ENCODE measurements at regions of chr19 and their contacts with region 1.

Region 1: DNA sequence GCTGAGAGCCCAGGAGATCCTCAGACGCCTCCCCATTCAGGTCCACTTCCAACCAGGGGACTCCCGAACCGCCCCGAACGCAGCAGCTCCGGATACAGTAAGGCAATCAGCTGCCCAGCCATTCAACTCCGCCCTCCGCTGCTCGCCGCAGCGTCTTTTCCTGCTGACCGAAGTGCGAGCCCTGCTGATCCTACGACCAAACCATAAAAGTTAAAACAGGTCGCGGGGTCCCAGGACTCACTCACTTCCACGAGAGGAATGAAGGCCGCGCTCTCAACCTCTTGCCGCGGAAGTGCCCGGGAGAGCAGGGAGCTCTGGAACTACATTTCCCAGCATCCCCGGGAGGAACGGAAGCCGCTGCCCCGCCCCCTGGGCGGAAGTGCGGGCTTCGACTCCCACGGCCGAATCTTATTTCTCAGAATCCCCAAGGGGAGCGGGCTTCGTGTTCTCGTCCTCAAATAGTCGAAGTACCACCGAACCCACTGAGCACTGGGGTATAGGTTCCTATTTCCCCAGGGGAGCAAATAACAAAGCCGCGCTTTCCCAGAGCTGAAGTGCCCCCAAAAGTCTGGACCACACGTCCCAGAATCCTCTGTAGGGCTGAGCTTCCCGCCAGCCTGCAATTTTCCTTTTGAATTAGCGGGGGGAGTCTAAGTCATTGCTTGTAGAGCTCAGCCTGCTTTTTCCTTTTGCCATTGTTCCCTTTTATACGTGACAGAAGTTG is at the start of gene ZNF45:
- DNase-seq: peak; percentile 87 to 94 (median 92)
- H3K4me3 ChIP-seq: peak within 1 kb of the TSS; percentile 45 to 98 (median 80)
- H3K27ac ChIP-seq: peak within 1 kb of the TSS; percentile 51 to 95 (median 88)
- H3K27me3 ChIP-seq: no peaks in the 10 kb centered on the region
- CTCF ChIP-seq: peak in 24 of 56 donors; percentile 8 to 49 (median 26)
- total RNA-seq, gene ZNF45: 5.4 to 16.4 (median 10.9) TPM

Region 2: GRCh38 chr19:43826787-43827754 is 108.1 kb before region 1 on chr19 and contains the start of gene ZNF283:
- intact Hi-C with region 1: loop called (anchors 5 to 10 kb)
- DNase-seq: peak; percentile 78 to 95 (median 94)
- H3K4me3 ChIP-seq: peak within 1 kb of the TSS; percentile 50 to 86 (median 76)
- H3K27ac ChIP-seq: peak within 1 kb of the TSS in 36 of 59 donors; percentile 3 to 78 (median 48)
- H3K27me3 ChIP-seq: no peaks in the 10 kb centered on the region
- CTCF ChIP-seq: peak in 22 of 56 donors; percentile 11 to 43 (median 24)
- total RNA-seq, gene ZNF283: 17.2 to 43.0 (median 24.6) TPM

Region 3: GRCh38 chr19:43842007-43842406 is 93.1 kb before region 1 on chr19:
- intact Hi-C with region 1: no loop called
- DNase-seq: no peak
- H3K4me3 ChIP-seq: no peak overlapping the region
- H3K27ac ChIP-seq: no peak overlapping the region
- H3K27me3 ChIP-seq: no peaks in the 10 kb centered on the region
- CTCF ChIP-seq: no peak

Region 4: GRCh38 chr19:43905897-43906296 is 29.2 kb before region 1 on chr19:
- intact Hi-C with region 1: loop called in 1 of 2 experiments (anchors 2 kb)
- DNase-seq: no peak
- H3K4me3 ChIP-seq: no peak overlapping the region
- H3K27ac ChIP-seq: no peak overlapping the region
- H3K27me3 ChIP-seq: no peaks in the 10 kb centered on the region
- CTCF ChIP-seq: no peak

Region 5: GRCh38 chr19:43950834-43951645 is 15.9 kb after region 1 on chr19 and contains the start of gene ZNF221:
- intact Hi-C with region 1: loop called (anchors 1 kb)
- DNase-seq: peak; percentile 80 to 92 (median 88)
- H3K4me3 ChIP-seq: peak within 1 kb of the TSS; percentile 54 to 99 (median 85)
- H3K27ac ChIP-seq: peak within 1 kb of the TSS in 55 of 59 donors; percentile 2 to 86 (median 71)
- H3K27me3 ChIP-seq: no peaks in the 10 kb centered on the region
- CTCF ChIP-seq: peak in 53 of 56 donors; percentile 19 to 74 (median 59)
- total RNA-seq, gene ZNF221: 7.4 to 29.1 (median 15.2) TPM

Region 6: GRCh38 chr19:43983912-43984686 is 49.0 kb after region 1 on chr19 and contains the start of gene ZNF155:
- intact Hi-C with region 1: loop called in 1 of 2 experiments (anchors 5 kb)
- DNase-seq: peak; percentile 88 to 97 (median 95)
- H3K4me3 ChIP-seq: peak within 1 kb of the TSS; percentile 43 to 86 (median 73)
- H3K27ac ChIP-seq: peak within 1 kb of the TSS in 42 of 59 donors; percentile 1 to 84 (median 50)
- H3K27me3 ChIP-seq: no peaks in the 10 kb centered on the region
- CTCF ChIP-seq: peak in 10 of 56 donors; percentile 5 to 35 (median 14)
- total RNA-seq, gene ZNF155: 6.7 to 16.6 (median 10.8) TPM

Region 7: GRCh38 chr19:44207126-44207803 is 272.1 kb after region 1 on chr19:
- intact Hi-C with region 1: loop called in 1 of 2 experiments (anchors 5 kb)
- DNase-seq: peak; percentile 76 to 91 (median 88)
- H3K4me3 ChIP-seq: peak overlapping the region; percentile 62 to 99 (median 88)
- H3K27ac ChIP-seq: peak overlapping the region; percentile 1 to 98 (median 89)
- H3K27me3 ChIP-seq: peaks cover 0 to 5% (median 0%) of the 10 kb centered on the region in 45 donors
- CTCF ChIP-seq: peak in 21 of 56 donors; percentile 8 to 47 (median 21)